ENCODE measurements at regions of chr6 and their contacts with region 1.

Region 1: GRCh38 chr6:137866914-137867684 is at the start of gene TNFAIP3:
- DNase-seq: peak; percentile 95 to 98
- ATAC-seq: peak; percentile 94
- H3K4me3 ChIP-seq: peak within 1 kb of the TSS; percentile 75 to 78
- H3K27ac ChIP-seq: peak within 1 kb of the TSS; percentile 40 to 77
- H3K4me1 ChIP-seq: no peaks in the 10 kb centered on the region
- H3K27me3 ChIP-seq: no peaks in the 10 kb centered on the region
- total RNA-seq, gene TNFAIP3: 22.0 to 40.2 TPM

Region 2: DNA sequence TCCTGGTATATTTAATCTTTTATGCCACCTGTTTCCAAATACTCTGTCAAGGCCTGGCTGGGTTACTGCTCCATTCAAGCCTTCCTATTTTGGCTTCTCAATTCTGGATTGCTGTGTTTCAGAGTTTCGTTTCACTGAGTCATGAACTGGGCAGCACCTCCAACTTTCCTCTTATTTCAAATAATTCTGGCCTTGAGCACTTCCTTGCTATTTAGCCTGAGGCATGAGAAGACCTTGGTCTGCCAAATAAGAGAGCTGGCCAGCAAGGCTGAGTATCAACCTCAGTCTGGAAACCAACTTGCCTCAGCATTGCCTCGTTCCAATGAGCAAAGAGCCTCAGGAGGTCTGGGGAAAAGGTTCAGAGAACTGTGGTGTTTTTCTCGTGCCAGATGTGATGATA is 66.6 kb after region 1 on chr6:
- intact Hi-C with region 1: loop called (anchors 5 kb)
- DNase-seq: peak in 1 of 2 donors; percentile 79
- ATAC-seq: peak; percentile 94
- H3K4me3 ChIP-seq: no peak overlapping the region
- H3K27ac ChIP-seq: peak overlapping the region in 1 of 2 donors; percentile 63
- H3K4me1 ChIP-seq: no peaks in the 10 kb centered on the region
- H3K27me3 ChIP-seq: no peaks in the 10 kb centered on the region

Region 3: DNA sequence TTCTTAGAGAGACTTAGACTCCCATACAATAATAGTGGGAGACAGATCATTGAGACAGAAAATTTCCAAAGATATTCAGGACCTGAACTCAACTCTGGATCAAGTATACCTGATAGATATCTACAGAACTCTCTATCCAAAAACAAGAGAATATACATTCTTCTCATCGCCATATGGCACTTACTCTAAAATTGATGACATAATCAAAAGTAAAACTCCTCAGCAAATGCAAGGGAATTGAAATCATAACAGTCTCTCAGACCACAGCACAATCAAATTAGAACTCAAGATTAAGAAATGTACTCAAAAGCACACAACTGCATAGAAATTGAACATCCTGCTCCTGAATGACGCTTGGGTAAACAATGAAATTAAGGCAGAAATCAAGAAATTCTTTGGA is 211.4 kb after region 1 on chr6:
- intact Hi-C with region 1: no loop called
- DNase-seq: no peak
- ATAC-seq: no peak
- H3K4me3 ChIP-seq: no peak overlapping the region
- H3K27ac ChIP-seq: no peak overlapping the region
- H3K4me1 ChIP-seq: no peaks in the 10 kb centered on the region
- H3K27me3 ChIP-seq: no peaks in the 10 kb centered on the region